ENCODE measurements at regions of chr2 and their contacts with region 1.

Region 1: DNA sequence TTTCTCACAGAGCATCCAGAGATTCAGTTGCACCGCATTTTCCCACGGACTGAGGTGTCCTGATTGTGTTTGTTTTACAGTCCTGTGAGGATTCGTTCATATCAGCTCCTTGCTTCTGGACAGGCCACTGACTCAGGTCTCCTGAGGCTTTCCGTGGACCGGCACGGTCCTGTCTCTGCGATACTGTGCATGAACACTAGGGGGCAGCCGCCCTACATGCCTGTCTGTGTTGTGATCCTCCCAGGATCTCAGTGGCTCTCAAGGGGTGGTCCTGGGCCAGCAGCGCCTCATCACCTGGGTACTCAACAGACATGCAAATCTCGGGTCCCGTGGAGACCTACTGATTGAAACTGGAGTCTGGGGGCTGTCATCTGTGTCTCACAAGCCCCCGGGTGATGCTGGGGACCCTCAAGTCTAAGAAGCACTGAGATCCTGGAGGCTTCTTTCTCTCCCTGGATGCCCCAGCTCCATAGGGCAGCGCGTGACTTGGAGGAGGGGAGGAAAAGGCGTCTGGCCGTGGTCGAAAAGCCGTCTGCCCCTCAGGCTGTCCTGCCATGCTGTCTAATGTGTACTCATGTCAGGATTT is 28.9 kb downstream of the IL1R2 start:
- DNase-seq: peak; percentile 84
- H3K4me3 Mint-ChIP-seq: no peak overlapping the region
- H3K27ac Mint-ChIP-seq: no peak overlapping the region
- H3K4me1 Mint-ChIP-seq: peaks cover 18% of the 10 kb centered on the region
- H3K27me3 Mint-ChIP-seq: no peaks in the 10 kb centered on the region
- CTCF ChIP-seq: peak; percentile 98

Region 2: DNA sequence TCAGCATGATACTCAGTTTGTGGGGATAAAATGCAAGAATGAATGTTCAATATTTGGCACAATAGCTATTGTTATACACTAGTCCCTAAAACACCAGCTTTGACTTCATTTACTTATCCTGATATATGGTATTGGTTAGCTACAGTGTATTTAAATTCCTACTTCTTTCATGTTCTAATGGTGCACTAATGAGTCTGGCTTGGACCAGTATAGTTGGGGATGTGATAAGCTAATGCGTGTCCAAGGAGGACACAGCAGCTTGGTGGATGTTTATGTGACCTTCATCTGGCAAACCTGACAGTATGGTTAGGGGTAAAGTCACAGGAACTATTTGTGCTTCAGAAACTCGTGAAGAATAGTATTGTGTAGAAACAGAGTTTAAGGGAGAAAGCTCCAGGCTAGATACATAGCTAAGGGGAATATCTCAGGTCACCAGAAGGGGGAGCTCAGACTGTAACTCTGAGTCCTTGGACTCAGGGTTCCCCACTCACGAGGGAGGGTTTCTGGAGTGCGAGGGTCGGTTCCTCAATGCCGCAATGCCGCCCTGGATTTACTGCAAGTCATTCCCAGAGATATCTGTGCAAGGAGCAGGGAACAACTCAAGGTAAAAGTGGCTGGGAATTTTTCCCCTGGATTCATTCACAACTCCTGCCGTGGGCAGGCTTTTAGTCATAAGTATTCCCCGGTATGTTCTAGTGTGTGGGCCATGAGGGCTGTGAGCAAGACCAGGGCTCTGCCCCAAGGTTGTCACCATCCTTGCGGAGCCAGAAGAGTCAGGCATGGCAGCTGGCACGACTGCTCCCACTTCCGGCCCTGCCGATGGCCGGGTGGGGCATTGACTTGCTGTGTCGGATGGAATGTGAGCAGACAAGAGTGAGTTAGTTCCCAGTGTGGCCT is 14.5 kb before region 1 on chr2:
- CTCF ChIA-PET with region 1: interaction called, 38 read pairs
- POLR2A ChIA-PET with region 1: no interaction called
- intact Hi-C with region 1: no loop called
- DNase-seq: peak; percentile 71
- H3K4me3 Mint-ChIP-seq: no peak overlapping the region
- H3K27ac Mint-ChIP-seq: no peak overlapping the region
- H3K4me1 Mint-ChIP-seq: no peaks in the 10 kb centered on the region
- H3K27me3 Mint-ChIP-seq: no peaks in the 10 kb centered on the region
- CTCF ChIP-seq: peak; percentile 56

Region 3: DNA sequence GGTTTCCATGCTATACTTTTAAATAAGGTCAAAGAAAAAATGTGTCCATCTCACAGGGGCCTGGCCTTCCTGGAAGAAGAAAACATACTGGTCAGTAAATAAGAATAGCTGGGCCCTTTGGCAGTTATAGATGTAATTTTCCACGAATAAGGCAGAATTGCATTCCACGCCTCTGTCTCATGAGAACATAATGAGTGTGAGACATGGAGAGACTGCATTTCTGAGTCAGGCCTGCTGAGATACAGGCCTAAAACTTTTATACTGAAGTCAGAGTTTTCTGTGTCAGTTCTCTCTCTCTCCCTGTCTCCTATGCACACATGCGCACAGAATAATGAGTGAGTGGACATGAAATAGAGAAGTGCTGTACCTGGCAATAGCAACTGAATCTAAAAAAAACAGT is 101.4 kb after region 1 on chr2:
- CTCF ChIA-PET with region 1: interaction called, 11 read pairs
- POLR2A ChIA-PET with region 1: no interaction called
- intact Hi-C with region 1: no loop called
- DNase-seq: no peak
- H3K4me3 Mint-ChIP-seq: no peak overlapping the region
- H3K27ac Mint-ChIP-seq: peak overlapping the region; percentile 27
- H3K4me1 Mint-ChIP-seq: peaks cover 19% of the 10 kb centered on the region
- H3K27me3 Mint-ChIP-seq: no peaks in the 10 kb centered on the region
- CTCF ChIP-seq: no peak

Region 4: DNA sequence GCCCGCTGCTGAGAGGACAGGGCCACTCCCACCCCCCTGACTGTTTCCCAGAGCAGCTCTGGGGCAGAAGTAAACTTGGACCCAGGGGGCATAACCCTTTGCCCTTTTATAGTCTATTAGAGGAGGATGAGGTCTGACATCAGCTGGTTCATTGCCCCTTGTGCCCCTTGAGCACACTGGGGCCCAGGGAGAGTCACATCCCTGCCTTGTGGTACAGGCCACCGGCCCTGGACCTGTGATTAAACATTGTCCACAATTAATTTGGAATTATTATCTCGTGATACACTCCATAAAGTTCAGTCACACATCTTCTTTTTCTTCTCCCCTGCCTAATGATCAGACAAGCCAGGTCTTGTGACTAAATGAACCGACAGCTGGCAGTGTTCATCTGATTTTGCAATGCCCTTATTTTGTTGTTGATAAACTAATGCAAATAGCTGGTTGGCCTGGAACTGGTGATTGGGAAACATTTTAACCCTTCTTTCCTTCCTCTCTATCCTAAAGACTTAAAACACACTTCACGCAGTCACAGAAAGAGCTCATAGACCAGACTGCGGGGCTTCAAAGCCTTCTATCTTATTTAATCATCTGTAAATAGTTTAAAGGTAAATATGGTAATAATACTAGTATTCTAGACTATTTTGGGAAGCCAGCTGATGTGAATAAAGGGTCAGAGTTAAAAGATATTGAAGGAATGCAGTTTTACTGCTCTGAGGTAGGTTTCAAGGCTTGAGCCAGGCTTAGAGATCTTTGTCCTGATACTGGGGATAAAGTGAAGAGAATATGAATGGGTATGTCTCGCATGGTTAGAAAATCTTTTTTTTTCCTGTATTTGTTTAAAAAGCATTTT is 135.2 kb after region 1 on chr2:
- CTCF ChIA-PET with region 1: interaction called, 53 read pairs
- POLR2A ChIA-PET with region 1: interaction called, 3 read pairs
- intact Hi-C with region 1: no loop called
- DNase-seq: peak; percentile 62
- H3K4me3 Mint-ChIP-seq: no peak overlapping the region
- H3K27ac Mint-ChIP-seq: peak overlapping the region; percentile 94
- H3K4me1 Mint-ChIP-seq: peaks cover 30% of the 10 kb centered on the region
- H3K27me3 Mint-ChIP-seq: no peaks in the 10 kb centered on the region
- CTCF ChIP-seq: no peak

Region 5: DNA sequence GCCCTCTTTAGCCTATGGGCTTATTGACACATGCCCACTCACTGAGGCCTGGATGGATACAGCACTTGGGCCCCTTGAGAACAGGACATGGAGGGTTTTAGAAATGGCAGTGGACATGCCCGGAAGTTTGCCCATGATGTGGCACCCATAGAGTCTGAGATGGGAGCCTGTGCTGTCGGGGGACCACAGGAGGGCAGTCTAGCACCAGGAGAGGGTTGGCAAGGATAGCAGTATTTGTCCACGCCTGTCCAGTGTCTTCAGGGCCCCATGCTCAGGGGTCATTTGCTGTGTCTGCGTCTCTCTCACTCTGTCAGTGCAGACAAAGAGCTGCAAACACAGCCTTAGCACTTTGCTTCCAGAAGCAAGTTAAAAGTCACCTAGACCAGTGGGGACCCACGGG is 214.8 kb after region 1 on chr2:
- CTCF ChIA-PET with region 1: interaction called, 115 read pairs
- POLR2A ChIA-PET with region 1: interaction called, 14 read pairs
- intact Hi-C with region 1: loop called (anchors 1 kb)
- DNase-seq: peak; percentile 44
- H3K4me3 Mint-ChIP-seq: no peak overlapping the region
- H3K27ac Mint-ChIP-seq: no peak overlapping the region
- H3K4me1 Mint-ChIP-seq: peaks cover 5% of the 10 kb centered on the region
- H3K27me3 Mint-ChIP-seq: no peaks in the 10 kb centered on the region
- CTCF ChIP-seq: peak; percentile 24

Region 6: GRCh38 chr2:102442967-102443828 is 422.5 kb after region 1 on chr2:
- CTCF ChIA-PET with region 1: interaction called, 24 read pairs
- POLR2A ChIA-PET with region 1: interaction called, 3 read pairs
- intact Hi-C with region 1: loop called (anchors 2 kb)
- DNase-seq: peak; percentile 48
- H3K4me3 Mint-ChIP-seq: no peak overlapping the region
- H3K27ac Mint-ChIP-seq: no peak overlapping the region
- H3K4me1 Mint-ChIP-seq: peaks cover 12% of the 10 kb centered on the region
- H3K27me3 Mint-ChIP-seq: no peaks in the 10 kb centered on the region
- CTCF ChIP-seq: peak; percentile 84

Measured in MCF 10A (cell line).